GM10248 (cell line): ENCODE measurements at regions of chr18 and their contacts with region 1.

Region 1: DNA sequence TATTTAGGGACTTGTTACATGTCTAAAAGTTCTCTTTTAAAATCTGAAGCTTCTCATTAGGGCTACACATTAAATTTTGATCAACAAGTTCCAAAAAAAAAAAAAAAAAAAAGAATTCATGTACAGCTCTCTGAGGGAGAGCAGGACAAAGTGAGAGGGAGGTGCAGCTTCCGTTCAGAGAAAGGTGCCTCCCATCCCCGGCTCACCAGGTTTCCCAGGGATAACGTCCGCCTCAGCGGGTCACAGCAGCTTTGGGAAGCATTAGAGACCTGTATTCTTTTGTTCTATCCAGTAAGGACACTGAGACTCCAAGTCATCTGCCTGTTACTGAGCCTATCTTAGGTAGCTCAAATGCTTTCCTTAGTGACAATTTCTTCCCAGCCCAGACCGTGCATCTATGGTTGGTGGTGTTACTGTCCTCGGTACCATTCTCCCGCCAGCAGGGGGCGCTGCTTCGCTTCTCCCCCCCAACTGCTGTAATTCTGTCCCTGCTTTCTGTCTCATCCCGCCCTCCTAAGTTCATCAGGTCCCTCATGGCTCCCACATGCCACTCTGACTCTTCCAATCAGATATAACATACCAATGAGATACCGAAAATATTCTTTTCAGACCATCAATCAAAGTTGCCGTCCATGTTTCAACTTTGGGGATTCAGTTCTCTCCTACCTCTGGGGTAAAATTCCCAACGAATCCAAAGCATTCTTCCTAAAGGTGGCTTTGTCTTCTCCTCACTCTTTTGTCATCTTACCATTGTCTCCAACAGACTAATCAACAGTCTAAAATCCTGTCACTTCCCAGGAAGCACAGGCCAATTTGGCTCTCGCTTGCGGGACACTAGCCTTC is 466.5 kb downstream of the METTL4 start:
- DNase-seq: peak; percentile 61
- CTCF ChIP-seq: peak; percentile 78

Region 2: DNA sequence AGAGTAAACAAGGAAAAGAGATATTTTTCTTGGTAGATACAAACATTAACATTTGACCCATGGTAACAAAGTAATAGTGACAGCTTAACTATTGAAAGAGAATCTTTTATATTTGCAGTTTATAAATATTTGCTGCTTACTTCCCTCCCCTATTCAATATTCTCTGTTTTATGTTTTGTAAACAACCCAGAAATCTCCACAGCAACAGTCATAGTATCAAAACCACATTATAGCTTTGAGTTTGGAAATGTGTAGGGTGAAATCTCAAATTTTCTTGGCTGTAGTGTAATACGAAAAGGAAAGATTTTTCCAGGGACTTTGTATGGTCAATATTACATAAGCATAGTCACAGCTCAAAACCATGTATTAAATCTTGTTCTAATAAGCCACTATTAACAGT is 44.8 kb before region 1 on chr18:
- CTCF ChIA-PET with region 1: no interaction called
- POLR2A ChIA-PET with region 1: no interaction called
- DNase-seq: no peak
- CTCF ChIP-seq: no peak

Region 3: GRCh38 chr18:2127521-2127920 is 22.7 kb after region 1 on chr18:
- CTCF ChIA-PET with region 1: interaction called, 21 read pairs
- POLR2A ChIA-PET with region 1: no interaction called
- DNase-seq: no peak
- CTCF ChIP-seq: no peak

Region 4: GRCh38 chr18:2223849-2224248 is 119.0 kb after region 1 on chr18:
- CTCF ChIA-PET with region 1: interaction called, 10 read pairs
- POLR2A ChIA-PET with region 1: no interaction called
- DNase-seq: no peak
- CTCF ChIP-seq: peak; percentile 54

Region 5: GRCh38 chr18:2258954-2259353 is 154.1 kb after region 1 on chr18:
- CTCF ChIA-PET with region 1: no interaction called
- POLR2A ChIA-PET with region 1: no interaction called
- DNase-seq: no peak
- CTCF ChIP-seq: no peak

Region 6: GRCh38 chr18:2540575-2540974 is 435.7 kb after region 1 on chr18:
- CTCF ChIA-PET with region 1: interaction called, 43 read pairs
- POLR2A ChIA-PET with region 1: no interaction called
- DNase-seq: no peak
- CTCF ChIP-seq: no peak

Region 7: DNA sequence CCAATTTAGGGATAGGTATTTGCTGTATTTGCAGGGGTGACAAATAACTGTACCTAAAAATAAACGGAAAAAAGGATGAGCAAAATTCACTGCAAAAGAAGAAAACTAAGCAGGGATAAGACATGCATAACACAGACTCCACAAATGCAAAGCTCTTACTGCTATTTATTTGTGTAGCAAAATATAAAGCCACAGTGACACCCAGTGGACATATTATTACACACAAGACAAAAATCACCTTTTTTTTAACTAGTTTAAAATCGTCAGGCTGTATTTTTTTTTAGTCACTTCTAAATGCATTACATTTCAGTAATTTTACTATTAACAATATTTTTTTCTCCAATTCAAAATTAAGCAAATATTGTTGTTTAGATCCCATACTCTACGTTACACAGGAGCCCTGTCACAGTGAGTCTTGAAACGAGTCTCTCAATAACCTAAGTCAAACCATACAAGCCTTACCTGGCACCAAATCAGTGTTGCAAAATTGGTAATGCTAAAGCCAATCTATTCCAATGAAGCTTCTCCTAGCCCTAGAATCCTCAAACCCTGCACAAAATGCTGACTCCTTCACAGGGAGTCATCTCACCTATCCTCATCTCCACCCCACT is 442.7 kb after region 1 on chr18:
- CTCF ChIA-PET with region 1: interaction called, 43 read pairs
- POLR2A ChIA-PET with region 1: no interaction called
- DNase-seq: peak; percentile 23
- CTCF ChIP-seq: peak; percentile 57